Naive thymus-derived CD8-positive, alpha-beta T cell (primary cell): ENCODE measurements at regions of chr16 and their contacts with region 1.

Region 1: GRCh38 chr16:68005786-68006286 is 6.6 kb upstream of the DPEP2 start:
- DNase-seq: peak in 9 of 10 donors; percentile 30 to 85 (median 62)
- ATAC-seq: peak; percentile 97 to 98
- H3K4me3 Mint-ChIP-seq: peak overlapping the region; percentile 29 to 75 (median 68)
- H3K27ac Mint-ChIP-seq: peak overlapping the region; percentile 81 to 99 (median 97)
- H3K4me1 Mint-ChIP-seq: peaks cover 13 to 57% (median 41%) of the 10 kb centered on the region in 4 donors
- H3K27me3 Mint-ChIP-seq: no peaks in the 10 kb centered on the region

Region 2: DNA sequence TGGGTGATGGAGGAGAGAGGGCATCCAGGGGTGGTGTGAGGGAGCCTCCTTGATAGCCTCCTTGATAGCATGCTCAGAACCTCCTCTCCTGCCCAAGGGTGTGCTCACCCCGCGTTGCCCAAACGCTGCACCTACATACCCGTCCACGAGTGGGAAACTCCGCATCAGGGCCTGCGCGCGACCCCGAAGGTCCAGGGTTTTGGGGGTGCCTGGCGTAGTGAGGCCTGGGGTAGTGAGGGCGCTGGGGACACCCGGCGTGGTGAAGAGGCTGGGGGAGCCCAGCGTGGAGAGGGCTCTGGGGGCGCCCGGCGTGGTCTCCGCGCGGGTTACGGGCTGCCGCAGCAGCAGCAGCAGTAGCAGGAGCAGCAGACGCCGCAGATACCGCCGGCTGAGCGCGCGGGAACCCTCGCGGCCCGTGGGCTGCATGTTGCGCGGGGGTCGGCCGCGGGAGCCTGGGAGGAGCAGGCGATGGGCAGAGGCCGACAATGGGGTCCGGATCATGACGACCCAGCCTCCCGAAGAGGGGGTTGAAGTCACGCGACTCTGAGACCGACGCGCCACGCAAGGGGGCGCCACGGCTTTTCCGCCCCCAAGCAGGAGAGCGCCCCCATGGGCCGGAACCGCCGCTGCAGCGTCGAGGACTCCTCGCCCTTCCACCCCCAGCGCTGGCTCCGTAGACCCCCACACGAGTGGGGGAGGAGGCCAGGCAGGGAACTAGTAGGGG is 25.7 kb before region 1 on chr16 and contains the start of gene DPEP3:
- POLR2A ChIA-PET with region 1: interaction called, 13 read pairs
- DNase-seq: peak in 2 of 10 donors; percentile 14 to 23
- ATAC-seq: peak in 1 of 2 donors; percentile 28
- H3K4me3 Mint-ChIP-seq: no peak within 1 kb of the TSS
- H3K27ac Mint-ChIP-seq: peak within 1 kb of the TSS in 1 of 10 donors; percentile 6
- H3K4me1 Mint-ChIP-seq: peaks cover 14 to 24% (median 20%) of the 10 kb centered on the region in 4 donors
- H3K27me3 Mint-ChIP-seq: no peaks in the 10 kb centered on the region
- polyA plus RNA-seq, gene DPEP3: 0.50 to 1.5 (median 1.1) TPM

Region 3: GRCh38 chr16:67993189-67994039 is 12.4 kb before region 1 on chr16:
- POLR2A ChIA-PET with region 1: interaction called, 106 read pairs
- DNase-seq: peak; percentile 71 to 87 (median 82)
- ATAC-seq: peak; percentile 90 to 91
- H3K4me3 Mint-ChIP-seq: peak overlapping the region; percentile 82 to 94 (median 90)
- H3K27ac Mint-ChIP-seq: peak overlapping the region; percentile 92 to 99 (median 97)
- H3K4me1 Mint-ChIP-seq: peaks cover 20 to 56% (median 44%) of the 10 kb centered on the region in 4 donors
- H3K27me3 Mint-ChIP-seq: no peaks in the 10 kb centered on the region

Region 4: DNA sequence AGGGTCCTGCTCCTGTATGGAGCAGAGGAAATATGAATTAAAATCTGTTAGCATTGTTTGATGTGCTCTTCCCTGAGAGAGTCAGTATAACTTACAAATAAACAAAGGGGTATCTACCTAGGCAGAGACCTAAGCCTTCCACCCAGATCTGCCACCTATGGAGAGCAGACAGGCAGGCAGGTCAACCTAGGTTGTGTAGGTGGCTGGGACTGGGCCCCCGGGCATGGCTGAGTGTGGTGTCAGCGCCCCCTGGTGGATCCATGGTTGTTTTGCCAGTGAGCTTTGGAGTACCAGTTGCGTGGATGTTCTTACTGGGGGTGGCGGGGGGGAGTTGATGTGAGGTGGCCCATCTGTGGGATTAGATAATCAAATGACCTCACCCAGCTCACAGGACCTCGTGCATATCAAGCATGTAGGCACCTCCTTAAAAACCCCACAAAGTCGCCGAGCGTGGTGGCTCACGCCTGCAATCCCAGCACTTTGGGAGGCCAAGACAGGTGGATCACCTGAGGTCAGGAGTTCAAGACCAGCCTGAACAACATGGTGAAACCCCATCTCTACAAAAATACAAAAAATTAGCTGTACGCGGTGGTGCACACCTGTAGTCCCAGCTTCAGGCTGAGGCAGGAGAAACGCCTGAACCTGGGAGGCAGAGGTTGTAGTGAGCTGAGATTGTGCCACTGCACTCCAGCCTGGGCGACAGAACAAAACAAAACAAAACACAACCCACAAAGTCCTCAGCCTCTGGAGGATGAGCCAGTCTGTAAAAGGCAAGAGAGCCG is 34.9 kb after region 1 on chr16:
- POLR2A ChIA-PET with region 1: interaction called, 10 read pairs
- DNase-seq: peak; percentile 78 to 95 (median 88)
- ATAC-seq: peak; percentile 99 to 100
- H3K4me3 Mint-ChIP-seq: peak overlapping the region in 2 of 10 donors; percentile 27 to 47
- H3K27ac Mint-ChIP-seq: peak overlapping the region in 9 of 10 donors; percentile 21 to 92 (median 66)
- H3K4me1 Mint-ChIP-seq: peaks cover 5 to 35% (median 11%) of the 10 kb centered on the region in 4 donors
- H3K27me3 Mint-ChIP-seq: no peaks in the 10 kb centered on the region